Activated CD4-positive, alpha-beta T cell treated with anti-CD3 and anti-CD28 coated beads for 36 hours (primary cell): ENCODE measurements at regions of chr19 and their contacts with region 1.

Region 1: GRCh38 chr19:44212250-44212865 is at the start of gene ZNF227:
- DNase-seq: peak; percentile 90
- ATAC-seq: peak; percentile 98
- H3K4me3 Mint-ChIP-seq: peak within 1 kb of the TSS; percentile 90
- H3K27ac Mint-ChIP-seq: peak within 1 kb of the TSS; percentile 92
- H3K4me1 Mint-ChIP-seq: peaks cover 22% of the 10 kb centered on the region
- H3K27me3 Mint-ChIP-seq: no peaks in the 10 kb centered on the region
- total RNA-seq, gene ZNF227: 19.4 to 20.6 TPM

Region 2: DNA sequence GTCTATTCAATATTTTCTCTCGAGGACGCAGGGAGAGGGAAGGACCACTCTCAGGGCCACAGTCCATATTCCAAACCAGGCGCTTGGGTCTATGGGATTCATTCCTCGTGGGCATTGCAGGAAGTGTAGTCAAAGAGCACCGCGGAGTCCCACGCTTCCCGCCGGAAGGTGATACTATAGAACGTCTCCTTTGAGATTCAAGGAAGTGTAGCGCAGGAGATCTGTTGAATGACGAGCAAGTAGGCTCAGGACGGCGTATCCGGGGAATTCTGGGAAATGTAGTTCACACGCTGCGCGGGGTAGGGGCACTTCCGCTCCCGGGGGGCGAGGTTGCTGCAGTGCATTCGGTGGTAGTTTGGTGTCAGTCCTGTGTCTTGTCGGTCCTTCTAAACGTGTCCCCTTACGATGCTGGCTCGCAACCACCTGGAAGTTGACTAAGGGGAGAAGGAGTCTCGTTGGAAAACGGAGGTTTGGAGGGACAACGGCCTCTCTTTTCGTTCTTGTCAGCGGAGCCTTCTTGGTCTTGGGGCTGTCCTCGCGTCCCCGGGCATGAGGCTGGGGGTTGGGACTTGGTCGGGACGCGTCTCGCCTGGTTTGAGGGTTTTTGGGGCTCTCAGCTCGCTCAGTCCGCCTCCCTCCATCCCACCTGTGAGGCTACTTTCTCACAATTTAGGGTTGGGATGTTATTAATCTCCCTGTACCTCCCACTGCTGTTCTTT is 140.4 kb before region 1 on chr19 and contains the start of gene ZNF284:
- CTCF ChIA-PET with region 1: no interaction called
- POLR2A ChIA-PET with region 1: no interaction called
- intact Hi-C with region 1: loop called in 1 of 2 experiments (anchors 2 kb)
- DNase-seq: peak; percentile 88
- ATAC-seq: peak; percentile 99
- H3K4me3 Mint-ChIP-seq: peak within 1 kb of the TSS; percentile 83
- H3K27ac Mint-ChIP-seq: peak within 1 kb of the TSS; percentile 78
- H3K4me1 Mint-ChIP-seq: peaks cover 23% of the 10 kb centered on the region
- H3K27me3 Mint-ChIP-seq: peaks cover 2% of the 10 kb centered on the region
- total RNA-seq, gene ZNF284: 2.1 TPM

Region 3: DNA sequence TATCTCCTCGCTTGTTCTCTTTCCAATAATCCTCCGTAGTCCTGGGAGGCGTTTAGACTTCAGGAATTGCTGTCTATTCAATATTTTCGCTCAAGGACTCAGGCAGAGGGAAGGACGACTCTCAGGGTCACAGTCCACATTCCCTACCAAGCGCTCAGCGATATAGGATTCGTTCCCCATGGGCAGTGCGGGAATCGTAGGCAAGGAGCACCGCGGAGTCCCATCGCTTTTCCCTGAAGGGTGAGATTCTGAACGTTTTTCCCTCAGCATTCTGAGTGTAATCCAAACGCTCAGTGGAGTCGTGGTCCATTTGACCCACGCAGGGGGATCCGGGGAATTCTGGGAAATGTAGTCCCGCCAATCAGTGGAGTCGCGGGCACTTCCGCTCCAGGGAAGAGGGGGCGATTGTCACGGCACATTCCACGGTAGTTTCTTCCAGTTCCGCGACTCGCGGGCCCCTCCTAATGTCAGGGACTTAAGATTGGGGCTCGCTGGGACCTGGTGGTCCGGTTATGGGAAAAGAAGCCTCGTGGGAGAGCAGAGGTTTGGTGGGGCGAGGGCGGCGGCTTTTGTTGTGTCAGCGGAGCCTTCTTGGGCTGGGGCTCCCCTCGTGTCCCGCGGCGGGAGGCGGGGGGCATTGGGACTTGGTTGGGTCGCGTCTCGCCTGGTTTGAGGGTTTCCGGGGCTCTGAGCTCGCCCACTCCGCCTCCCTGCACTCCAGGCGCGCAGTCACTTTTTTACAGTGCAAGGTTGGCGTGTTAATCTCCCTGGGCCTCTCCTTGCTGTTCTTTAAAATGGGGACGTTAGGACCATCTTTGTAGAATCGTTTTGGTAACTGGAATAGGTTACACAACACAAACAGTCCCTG is 70.9 kb before region 1 on chr19 and contains the start of gene ZNF234:
- CTCF ChIA-PET with region 1: no interaction called
- POLR2A ChIA-PET with region 1: no interaction called
- intact Hi-C with region 1: loop called in 1 of 2 experiments (anchors 1 kb)
- DNase-seq: peak; percentile 82
- ATAC-seq: peak; percentile 92
- H3K4me3 Mint-ChIP-seq: peak within 1 kb of the TSS; percentile 92
- H3K27ac Mint-ChIP-seq: peak within 1 kb of the TSS; percentile 94
- H3K4me1 Mint-ChIP-seq: peaks cover 12% of the 10 kb centered on the region
- H3K27me3 Mint-ChIP-seq: no peaks in the 10 kb centered on the region
- total RNA-seq, gene ZNF234: 7.9 to 10.4 TPM

Region 4: GRCh38 chr19:44258835-44259413 is 46.6 kb after region 1 on chr19:
- CTCF ChIA-PET with region 1: no interaction called
- POLR2A ChIA-PET with region 1: no interaction called
- intact Hi-C with region 1: loop called in 1 of 2 experiments (anchors 1 kb)
- DNase-seq: no peak
- ATAC-seq: no peak
- H3K4me3 Mint-ChIP-seq: no peak overlapping the region
- H3K27ac Mint-ChIP-seq: no peak overlapping the region
- H3K4me1 Mint-ChIP-seq: peaks cover 8% of the 10 kb centered on the region
- H3K27me3 Mint-ChIP-seq: no peaks in the 10 kb centered on the region

Region 5: GRCh38 chr19:44304659-44305193 is 92.4 kb after region 1 on chr19 and contains the start of gene ZNF235:
- CTCF ChIA-PET with region 1: interaction called, 4 read pairs
- POLR2A ChIA-PET with region 1: no interaction called
- intact Hi-C with region 1: loop called (anchors 1 to 2 kb)
- DNase-seq: peak; percentile 87
- ATAC-seq: peak; percentile 97
- H3K4me3 Mint-ChIP-seq: peak within 1 kb of the TSS; percentile 83
- H3K27ac Mint-ChIP-seq: peak within 1 kb of the TSS; percentile 64
- H3K4me1 Mint-ChIP-seq: peaks cover 12% of the 10 kb centered on the region
- H3K27me3 Mint-ChIP-seq: no peaks in the 10 kb centered on the region
- total RNA-seq, gene ZNF235: 2.1 to 2.7 TPM

Region 6: DNA sequence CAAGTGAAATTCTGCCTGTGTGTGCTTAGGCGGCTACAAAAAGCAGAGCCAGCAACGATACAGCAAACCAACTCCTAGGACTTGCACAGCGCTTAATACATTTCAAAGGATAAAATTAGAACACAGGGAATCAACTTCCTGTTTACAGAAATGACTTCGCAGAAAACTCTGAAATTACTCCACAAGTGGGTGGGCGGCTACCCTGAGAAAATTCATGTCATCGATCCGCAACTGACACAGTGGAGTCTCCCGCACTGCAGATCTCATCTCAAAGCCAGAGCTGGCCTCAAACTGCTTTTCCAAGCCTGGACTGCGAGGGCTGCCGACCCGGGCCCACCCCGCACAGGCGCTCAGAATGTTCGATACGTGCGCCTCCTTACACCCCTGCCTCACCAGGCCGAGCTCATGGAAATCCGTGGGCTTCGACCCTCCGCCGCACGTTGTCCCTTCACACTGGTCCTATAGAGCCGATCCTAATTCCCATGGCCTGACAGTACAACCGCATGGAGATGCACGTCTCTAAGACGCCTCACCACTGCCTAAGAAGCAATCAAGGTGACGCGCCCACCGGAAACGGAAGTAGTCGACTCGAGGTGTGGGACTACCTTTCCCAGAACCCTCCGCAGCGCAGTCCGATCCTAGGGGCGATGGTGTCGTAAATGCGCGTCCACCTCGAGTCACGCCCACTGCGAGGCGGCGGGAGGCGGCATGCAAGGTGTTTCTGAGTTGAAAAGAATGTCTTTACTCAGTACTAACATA is 235.7 kb after region 1 on chr19 and contains the start of gene ZNF229:
- CTCF ChIA-PET with region 1: no interaction called
- POLR2A ChIA-PET with region 1: interaction called, 4 read pairs
- intact Hi-C with region 1: loop called in 1 of 2 experiments (anchors 1 kb)
- DNase-seq: peak; percentile 91
- ATAC-seq: peak; percentile 98
- H3K4me3 Mint-ChIP-seq: peak within 1 kb of the TSS; percentile 81
- H3K27ac Mint-ChIP-seq: peak within 1 kb of the TSS; percentile 84
- H3K4me1 Mint-ChIP-seq: peaks cover 10% of the 10 kb centered on the region
- H3K27me3 Mint-ChIP-seq: peaks cover 2% of the 10 kb centered on the region
- total RNA-seq, gene ZNF229: 1.0 to 1.2 TPM